Dorsolateral prefrontal cortex (tissue), 120 donors: ENCODE measurements at regions of chr15 and their contacts with region 1.

Region 1: GRCh38 chr15:86915811-86916331 is 836.2 kb downstream of the AGBL1 start:
- DNase-seq: peak in 8 of 10 donors; percentile 33 to 59 (median 42)
- H3K4me3 ChIP-seq: peak overlapping the region in 25 of 59 donors; percentile 0 to 49 (median 18)
- H3K27ac ChIP-seq: peak overlapping the region; percentile 51 to 97 (median 91)
- H3K27me3 ChIP-seq: no peaks in the 10 kb centered on the region
- CTCF ChIP-seq: peak in 55 of 56 donors; percentile 55 to 84 (median 71)

Region 2: DNA sequence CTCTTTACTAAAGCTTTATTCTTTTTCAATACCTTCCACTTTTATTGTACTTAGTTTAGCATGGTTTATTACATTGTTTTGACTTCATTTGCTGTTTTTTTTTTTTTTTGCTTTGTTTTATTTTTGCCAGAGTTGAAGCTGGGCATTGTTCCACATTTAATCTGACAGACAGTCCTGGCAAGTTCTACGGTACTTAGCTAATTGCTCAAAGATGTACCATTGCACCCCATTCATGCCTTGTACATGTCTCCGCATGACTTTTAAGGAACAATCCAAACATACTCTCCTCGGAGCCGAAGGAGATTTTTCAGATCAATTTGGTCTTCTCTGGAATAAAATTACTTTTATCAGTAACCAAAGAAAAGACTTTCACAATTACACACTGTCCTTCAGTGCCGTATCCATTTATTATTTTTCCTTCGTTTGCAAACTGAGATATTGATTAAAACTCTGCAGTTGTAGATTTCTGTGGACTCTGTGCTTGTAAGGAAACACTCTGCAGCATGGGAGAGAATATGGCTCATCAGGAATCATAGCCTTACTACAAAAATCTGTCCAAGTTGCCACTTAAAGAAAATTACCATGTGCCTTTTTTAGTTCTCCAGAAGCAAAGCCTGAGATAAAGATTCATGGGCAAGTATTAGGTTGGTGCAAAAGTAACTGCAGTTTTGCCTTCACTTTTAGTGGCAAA is 115.8 kb after region 1 on chr15:
- intact Hi-C with region 1: loop called in 1 of 2 experiments (anchors 2 kb)
- DNase-seq: no peak
- H3K4me3 ChIP-seq: peak overlapping the region in 16 of 59 donors; percentile 3 to 39 (median 20)
- H3K27ac ChIP-seq: no peak overlapping the region
- H3K27me3 ChIP-seq: no peaks in the 10 kb centered on the region
- CTCF ChIP-seq: no peak

Region 3: GRCh38 chr15:87287011-87287489 is 371.2 kb after region 1 on chr15:
- intact Hi-C with region 1: no loop called
- DNase-seq: no peak
- H3K4me3 ChIP-seq: no peak overlapping the region
- H3K27ac ChIP-seq: no peak overlapping the region
- H3K27me3 ChIP-seq: peaks cover 0 to 2% (median 0%) of the 10 kb centered on the region in 45 donors
- CTCF ChIP-seq: no peak

Region 4: GRCh38 chr15:87604857-87605446 is 689.1 kb after region 1 on chr15:
- intact Hi-C with region 1: loop called (anchors 5 to 10 kb)
- DNase-seq: peak in 2 of 10 donors; percentile 14 to 29
- H3K4me3 ChIP-seq: no peak overlapping the region
- H3K27ac ChIP-seq: no peak overlapping the region
- H3K27me3 ChIP-seq: no peaks in the 10 kb centered on the region
- CTCF ChIP-seq: peak in 55 of 56 donors; percentile 18 to 70 (median 55)